ENCODE measurements at regions of chr7 and their contacts with region 1.

Region 1: GRCh38 chr7:4973728-4974198 is 14.8 kb upstream of the MMD2 start:
- DNase-seq: peak; percentile 89 to 99 (median 95)
- ATAC-seq: peak; percentile 99
- H3K4me3 ChIP-seq: peak overlapping the region; percentile 68
- H3K4me3 Mint-ChIP-seq: peak overlapping the region; percentile 85 to 100 (median 98)
- H3K27ac ChIP-seq: peak overlapping the region; percentile 78
- H3K27ac Mint-ChIP-seq: peak overlapping the region; percentile 90 to 99 (median 95)
- H3K4me1 ChIP-seq: peaks cover 4 to 9% of the 10 kb centered on the region in 2 donors
- H3K4me1 Mint-ChIP-seq: peaks cover 22 to 44% (median 33%) of the 10 kb centered on the region in 7 donors
- H3K27me3 ChIP-seq: no peaks in the 10 kb centered on the region
- H3K27me3 Mint-ChIP-seq: peaks cover 0 to 2% (median 0%) of the 10 kb centered on the region in 5 donors

Region 2: GRCh38 chr7:4641667-4642467 is 331.9 kb before region 1 on chr7:
- CTCF ChIA-PET with region 1: interaction called, 3 read pairs
- POLR2A ChIA-PET with region 1: no interaction called
- intact Hi-C with region 1: loop called in 1 of 2 experiments (anchors 2 kb)
- DNase-seq: peak; percentile 94 to 99 (median 98)
- ATAC-seq: peak; percentile 92
- H3K4me3 ChIP-seq: peak overlapping the region; percentile 85
- H3K4me3 Mint-ChIP-seq: peak overlapping the region; percentile 73 to 94 (median 90)
- H3K27ac ChIP-seq: peak overlapping the region; percentile 87
- H3K27ac Mint-ChIP-seq: peak overlapping the region; percentile 89 to 99 (median 97)
- H3K4me1 ChIP-seq: peaks cover 7 to 10% of the 10 kb centered on the region in 2 donors
- H3K4me1 Mint-ChIP-seq: peaks cover 5 to 26% (median 13%) of the 10 kb centered on the region in 7 donors
- H3K27me3 ChIP-seq: no peaks in the 10 kb centered on the region
- H3K27me3 Mint-ChIP-seq: no peaks in the 10 kb centered on the region

Region 3: GRCh38 chr7:4830176-4830575 is 143.6 kb before region 1 on chr7:
- CTCF ChIA-PET with region 1: no interaction called
- POLR2A ChIA-PET with region 1: no interaction called
- intact Hi-C with region 1: loop called in 1 of 2 experiments (anchors 1 kb)
- DNase-seq: peak; percentile 23 to 69 (median 49)
- ATAC-seq: peak; percentile 79
- H3K4me3 ChIP-seq: no peak overlapping the region
- H3K4me3 Mint-ChIP-seq: no peak overlapping the region
- H3K27ac ChIP-seq: no peak overlapping the region
- H3K27ac Mint-ChIP-seq: peak overlapping the region in 2 of 9 donors; percentile 64 to 87
- H3K4me1 ChIP-seq: no peaks in the 10 kb centered on the region
- H3K4me1 Mint-ChIP-seq: peaks cover 0 to 6% (median 5%) of the 10 kb centered on the region in 7 donors
- H3K27me3 ChIP-seq: no peaks in the 10 kb centered on the region
- H3K27me3 Mint-ChIP-seq: peaks cover 0 to 7% (median 0%) of the 10 kb centered on the region in 5 donors

Region 4: GRCh38 chr7:5083311-5083711 is 109.5 kb after region 1 on chr7:
- CTCF ChIA-PET with region 1: interaction called, 39 read pairs
- POLR2A ChIA-PET with region 1: no interaction called
- intact Hi-C with region 1: loop called (anchors 1 kb)
- DNase-seq: no peak
- ATAC-seq: no peak
- H3K4me3 ChIP-seq: no peak overlapping the region
- H3K4me3 Mint-ChIP-seq: peak overlapping the region in 1 of 10 donors; percentile 11
- H3K27ac ChIP-seq: no peak overlapping the region
- H3K27ac Mint-ChIP-seq: peak overlapping the region in 1 of 9 donors; percentile 38
- H3K4me1 ChIP-seq: no peaks in the 10 kb centered on the region
- H3K4me1 Mint-ChIP-seq: peaks cover 0 to 14% (median 4%) of the 10 kb centered on the region in 7 donors
- H3K27me3 ChIP-seq: no peaks in the 10 kb centered on the region
- H3K27me3 Mint-ChIP-seq: peaks cover 0 to 26% (median 0%) of the 10 kb centered on the region in 5 donors

Measured in naive thymus-derived CD4-positive, alpha-beta T cell (primary cell).